ENCODE measurements at regions of chr14 and their contacts with region 1.

Region 1: DNA sequence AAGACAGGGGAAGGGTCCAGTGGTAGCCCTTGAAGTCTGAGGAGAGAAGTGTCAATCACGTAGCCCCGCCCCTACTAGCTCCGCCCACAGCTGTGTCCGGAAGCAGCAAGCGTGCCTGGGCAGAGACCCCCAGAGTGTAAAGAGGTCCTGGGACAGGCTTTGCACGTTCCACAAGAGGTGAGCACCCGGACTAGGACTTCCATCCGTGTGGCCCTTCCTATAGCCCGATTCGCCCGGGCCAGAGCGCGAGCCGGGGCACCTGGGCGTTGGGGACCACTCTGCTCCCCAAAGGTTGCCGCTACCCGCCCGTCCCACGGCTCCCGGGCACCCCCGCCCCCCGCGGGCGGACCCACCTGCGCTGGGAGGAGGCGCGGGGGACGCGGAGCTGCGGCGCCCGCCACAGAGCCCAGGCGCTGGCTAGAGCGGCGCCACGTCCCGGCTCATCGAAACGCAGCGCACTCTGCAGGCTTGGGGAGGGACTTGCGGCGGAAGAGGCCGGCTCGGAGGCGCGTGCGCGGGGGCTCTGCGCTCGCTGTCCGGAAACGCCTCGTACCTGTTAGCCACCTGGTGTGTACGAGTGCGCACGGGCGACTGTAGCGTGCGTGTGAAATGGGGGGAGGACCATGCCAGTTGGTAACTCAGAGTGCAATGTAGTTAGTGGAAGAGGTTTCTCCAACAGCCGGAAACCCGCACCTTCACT is at the start of gene RABGGTA:
- DNase-seq: peak; percentile 87
- H3K4me3 Mint-ChIP-seq: peak within 1 kb of the TSS; percentile 93
- H3K27ac Mint-ChIP-seq: peak within 1 kb of the TSS; percentile 96
- H3K4me1 Mint-ChIP-seq: peaks cover 52% of the 10 kb centered on the region
- H3K27me3 Mint-ChIP-seq: no peaks in the 10 kb centered on the region
- total RNA-seq, gene RABGGTA: 52.2 and 54.4 TPM in 2 replicates

Region 2: DNA sequence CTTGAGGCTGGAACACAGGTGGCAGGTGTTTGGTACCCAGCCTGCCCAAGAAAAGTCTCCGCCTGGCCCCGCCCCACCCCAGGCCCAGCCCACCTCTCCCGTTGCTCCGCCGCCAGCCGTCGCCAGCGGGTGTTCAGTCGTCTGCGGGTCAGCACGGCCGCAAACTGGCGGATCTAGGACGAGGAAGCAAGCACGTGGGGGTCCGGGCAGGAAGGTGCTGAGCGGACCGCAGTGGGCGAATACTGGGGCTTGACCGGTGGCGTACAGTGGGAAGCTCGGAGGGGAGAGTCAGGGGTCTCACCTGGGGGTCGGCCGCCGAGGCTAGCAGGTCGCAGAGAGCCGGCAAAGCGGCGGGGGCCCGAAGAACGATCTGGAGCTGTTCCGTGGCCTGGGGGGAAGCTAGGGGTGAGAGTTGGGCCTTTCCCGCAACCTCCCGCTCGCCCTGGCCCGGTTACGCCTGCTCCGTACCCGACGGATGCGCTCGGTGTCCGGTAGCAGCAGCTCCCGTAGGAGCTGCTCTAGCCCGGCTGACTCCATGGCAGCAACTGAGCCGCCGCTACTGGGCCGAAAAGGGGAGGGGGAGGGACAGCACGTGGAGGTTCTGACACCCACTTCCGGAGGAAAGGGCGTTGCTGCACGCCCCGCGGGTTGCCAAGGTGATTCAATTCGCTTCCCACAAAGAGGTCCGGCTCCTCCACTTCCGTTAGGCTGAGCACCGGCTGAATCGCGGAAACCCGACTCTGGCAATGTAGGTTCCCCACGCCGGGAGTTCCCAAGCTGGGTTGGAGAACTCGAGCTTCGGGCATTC is 82.8 kb before region 1 on chr14 and contains the start of gene IPO4:
- intact Hi-C with region 1: loop called (anchors 1 kb)
- DNase-seq: peak; percentile 93
- H3K4me3 Mint-ChIP-seq: peak within 1 kb of the TSS; percentile 91
- H3K27ac Mint-ChIP-seq: peak within 1 kb of the TSS; percentile 86
- H3K4me1 Mint-ChIP-seq: peaks cover 42% of the 10 kb centered on the region
- H3K27me3 Mint-ChIP-seq: no peaks in the 10 kb centered on the region
- total RNA-seq, gene IPO4: 106 and 107 TPM in 2 replicates

Region 3: GRCh38 chr14:24232121-24232644 is 39.1 kb before region 1 on chr14 and contains the start of gene NEDD8:
- intact Hi-C with region 1: loop called (anchors 1 kb)
- DNase-seq: peak; percentile 84
- H3K4me3 Mint-ChIP-seq: peak within 1 kb of the TSS; percentile 93
- H3K27ac Mint-ChIP-seq: peak within 1 kb of the TSS; percentile 91
- H3K4me1 Mint-ChIP-seq: peaks cover 50% of the 10 kb centered on the region
- H3K27me3 Mint-ChIP-seq: no peaks in the 10 kb centered on the region
- total RNA-seq, gene NEDD8: 177 and 185 TPM in 2 replicates

Region 4: GRCh38 chr14:24289649-24290249 is 18.5 kb after region 1 on chr14:
- intact Hi-C with region 1: loop called (anchors 1 kb)
- DNase-seq: peak; percentile 44
- H3K4me3 Mint-ChIP-seq: no peak overlapping the region
- H3K27ac Mint-ChIP-seq: no peak overlapping the region
- H3K4me1 Mint-ChIP-seq: peaks cover 25% of the 10 kb centered on the region
- H3K27me3 Mint-ChIP-seq: peaks cover 14% of the 10 kb centered on the region

Region 5: GRCh38 chr14:24332268-24332993 is 61.1 kb after region 1 on chr14:
- intact Hi-C with region 1: loop called (anchors 1 kb)
- DNase-seq: peak; percentile 79
- H3K4me3 Mint-ChIP-seq: peak overlapping the region; percentile 80
- H3K27ac Mint-ChIP-seq: peak overlapping the region; percentile 27
- H3K4me1 Mint-ChIP-seq: peaks cover 58% of the 10 kb centered on the region
- H3K27me3 Mint-ChIP-seq: peaks cover 29% of the 10 kb centered on the region

Region 6: DNA sequence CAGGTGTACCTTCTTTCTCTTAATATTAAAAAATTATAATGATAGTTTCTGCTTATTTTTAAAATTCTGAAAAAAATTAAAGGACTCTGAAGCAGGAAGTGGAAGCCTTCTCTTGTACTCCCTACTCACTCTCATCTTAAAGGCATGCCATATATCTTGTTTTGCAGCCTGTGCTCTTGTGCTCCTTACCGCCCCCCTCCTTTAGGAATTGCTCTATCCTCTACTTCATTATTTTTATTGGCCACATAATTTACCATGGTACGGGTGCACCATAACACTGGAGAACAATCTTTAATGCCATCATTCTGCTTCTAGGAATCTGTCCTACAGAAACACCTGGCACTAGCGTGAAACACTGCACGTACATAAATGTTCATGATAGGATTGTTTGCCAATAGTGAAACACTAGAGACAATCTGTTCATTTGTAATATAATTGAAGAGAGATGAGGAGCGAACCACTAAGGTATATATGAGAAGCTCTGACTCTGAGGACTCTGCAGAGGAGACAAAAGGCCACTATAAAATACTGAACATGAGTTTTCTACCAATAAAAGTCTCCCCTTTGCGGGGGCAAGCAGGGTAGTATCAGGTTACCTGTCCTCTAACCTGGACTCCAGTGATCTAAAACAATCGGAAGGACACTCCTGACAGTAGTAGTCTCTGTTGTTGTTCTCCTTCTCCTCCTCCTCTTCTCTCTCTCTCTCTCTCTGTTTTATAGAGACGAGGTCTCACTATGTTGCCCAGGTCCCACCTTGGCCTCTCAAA is 121.2 kb after region 1 on chr14:
- intact Hi-C with region 1: no loop called
- DNase-seq: no peak
- H3K4me3 Mint-ChIP-seq: no peak overlapping the region
- H3K27ac Mint-ChIP-seq: no peak overlapping the region
- H3K4me1 Mint-ChIP-seq: no peaks in the 10 kb centered on the region
- H3K27me3 Mint-ChIP-seq: peaks cover 19% of the 10 kb centered on the region

Measured in activated T-helper 1 cell treated with anti-CD3 and anti-CD28 coated beads, Interleukin-12 subunit alpha, Interleukin-12 subunit beta, Interleukin-2, Interleukin-4 antibody, amounts not matched to agents 30 ng/mL and 10 ng/mL and 1 ng/mL, durations not matched to agents 14 hours and 24 hours and 36 hours (primary cell).